ENCODE measurements at regions of chr3 and their contacts with region 1.

Region 1: GRCh38 chr3:38117748-38118420 is 19.0 kb downstream of the ACAA1 start:
- DNase-seq: peak; percentile 86
- H3K4me3 Mint-ChIP-seq: no peak overlapping the region
- H3K27ac Mint-ChIP-seq: peak overlapping the region; percentile 22
- H3K4me1 Mint-ChIP-seq: peaks cover 3% of the 10 kb centered on the region
- H3K27me3 Mint-ChIP-seq: peaks cover 6% of the 10 kb centered on the region

Region 2: GRCh38 chr3:37492977-37493471 is 624.9 kb before region 1 on chr3:
- CTCF ChIA-PET with region 1: no interaction called
- DNase-seq: no peak
- H3K4me3 Mint-ChIP-seq: no peak overlapping the region
- H3K27ac Mint-ChIP-seq: no peak overlapping the region
- H3K4me1 Mint-ChIP-seq: no peaks in the 10 kb centered on the region
- H3K27me3 Mint-ChIP-seq: peaks cover 14% of the 10 kb centered on the region

Region 3: GRCh38 chr3:38131621-38132369 is 13.9 kb after region 1 on chr3:
- CTCF ChIA-PET with region 1: interaction called, 17 read pairs
- DNase-seq: peak; percentile 44
- H3K4me3 Mint-ChIP-seq: no peak overlapping the region
- H3K27ac Mint-ChIP-seq: no peak overlapping the region
- H3K4me1 Mint-ChIP-seq: peaks cover 42% of the 10 kb centered on the region
- H3K27me3 Mint-ChIP-seq: no peaks in the 10 kb centered on the region

Region 4: GRCh38 chr3:38297947-38298711 is 180.2 kb after region 1 on chr3:
- CTCF ChIA-PET with region 1: interaction called, 26 read pairs
- DNase-seq: no peak
- H3K4me3 Mint-ChIP-seq: no peak overlapping the region
- H3K27ac Mint-ChIP-seq: no peak overlapping the region
- H3K4me1 Mint-ChIP-seq: no peaks in the 10 kb centered on the region
- H3K27me3 Mint-ChIP-seq: peaks cover 22% of the 10 kb centered on the region

Region 5: DNA sequence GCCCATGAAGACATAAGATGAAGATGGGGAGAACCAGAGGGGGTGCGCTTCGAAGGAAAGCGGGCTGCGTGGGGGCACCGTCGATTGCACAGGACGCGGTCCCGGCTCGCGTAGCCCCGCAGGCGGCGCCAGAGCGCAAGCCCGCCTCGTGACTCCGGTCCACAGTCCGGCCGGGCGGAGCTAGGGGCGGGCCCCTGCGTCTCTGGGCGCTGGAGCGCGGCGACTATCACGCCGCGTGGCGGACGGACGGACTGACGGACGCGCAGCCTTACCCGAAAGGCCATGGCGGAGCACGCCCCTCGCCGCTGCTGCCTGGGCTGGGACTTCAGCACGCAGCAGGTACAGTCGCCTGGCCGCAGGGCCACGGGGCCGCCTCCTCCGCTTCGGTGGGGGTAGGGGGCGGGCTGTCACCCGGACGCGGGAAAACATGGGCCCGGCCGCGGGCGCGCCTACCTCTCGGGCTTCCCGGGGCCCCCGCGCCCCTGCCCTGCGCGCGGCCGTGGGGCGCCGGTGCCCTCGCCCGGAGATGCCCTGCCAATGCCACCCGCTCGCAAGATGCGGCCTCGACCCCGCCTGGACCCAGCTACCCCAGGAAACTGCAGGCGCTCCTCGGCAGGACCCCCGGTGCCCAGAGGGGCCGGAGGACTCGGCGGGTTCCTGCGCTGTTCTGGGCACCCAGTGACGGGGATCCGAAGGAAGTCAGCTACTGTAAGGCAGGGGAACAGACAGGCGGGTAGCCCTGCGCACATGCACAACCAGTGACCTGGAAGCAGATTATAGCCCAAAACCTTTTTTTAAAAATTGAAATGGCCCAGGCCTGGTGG is 228.9 kb after region 1 on chr3 and contains the start of gene XYLB:
- CTCF ChIA-PET with region 1: interaction called, 76 read pairs
- DNase-seq: peak; percentile 87
- H3K4me3 Mint-ChIP-seq: peak within 1 kb of the TSS; percentile 76
- H3K27ac Mint-ChIP-seq: peak within 1 kb of the TSS; percentile 62
- H3K4me1 Mint-ChIP-seq: peaks cover 6% of the 10 kb centered on the region
- H3K27me3 Mint-ChIP-seq: peaks cover 4% of the 10 kb centered on the region

Region 6: GRCh38 chr3:38479431-38480092 is 361.7 kb after region 1 on chr3:
- CTCF ChIA-PET with region 1: interaction called, 27 read pairs
- DNase-seq: peak; percentile 68
- H3K4me3 Mint-ChIP-seq: no peak overlapping the region
- H3K27ac Mint-ChIP-seq: no peak overlapping the region
- H3K4me1 Mint-ChIP-seq: peaks cover 2% of the 10 kb centered on the region
- H3K27me3 Mint-ChIP-seq: no peaks in the 10 kb centered on the region